ENCODE measurements at regions of chr5 and their contacts with region 1.

Region 1: GRCh38 chr5:150778517-150779396 is at the start of gene SMIM3:
- DNase-seq: peak; percentile 84
- H3K4me3 Mint-ChIP-seq: peak within 1 kb of the TSS; percentile 99
- H3K27ac Mint-ChIP-seq: peak within 1 kb of the TSS; percentile 84
- H3K4me1 Mint-ChIP-seq: peaks cover 52% of the 10 kb centered on the region
- H3K27me3 Mint-ChIP-seq: no peaks in the 10 kb centered on the region
- total RNA-seq, gene SMIM3: 22.4 to 22.8 TPM

Region 2: DNA sequence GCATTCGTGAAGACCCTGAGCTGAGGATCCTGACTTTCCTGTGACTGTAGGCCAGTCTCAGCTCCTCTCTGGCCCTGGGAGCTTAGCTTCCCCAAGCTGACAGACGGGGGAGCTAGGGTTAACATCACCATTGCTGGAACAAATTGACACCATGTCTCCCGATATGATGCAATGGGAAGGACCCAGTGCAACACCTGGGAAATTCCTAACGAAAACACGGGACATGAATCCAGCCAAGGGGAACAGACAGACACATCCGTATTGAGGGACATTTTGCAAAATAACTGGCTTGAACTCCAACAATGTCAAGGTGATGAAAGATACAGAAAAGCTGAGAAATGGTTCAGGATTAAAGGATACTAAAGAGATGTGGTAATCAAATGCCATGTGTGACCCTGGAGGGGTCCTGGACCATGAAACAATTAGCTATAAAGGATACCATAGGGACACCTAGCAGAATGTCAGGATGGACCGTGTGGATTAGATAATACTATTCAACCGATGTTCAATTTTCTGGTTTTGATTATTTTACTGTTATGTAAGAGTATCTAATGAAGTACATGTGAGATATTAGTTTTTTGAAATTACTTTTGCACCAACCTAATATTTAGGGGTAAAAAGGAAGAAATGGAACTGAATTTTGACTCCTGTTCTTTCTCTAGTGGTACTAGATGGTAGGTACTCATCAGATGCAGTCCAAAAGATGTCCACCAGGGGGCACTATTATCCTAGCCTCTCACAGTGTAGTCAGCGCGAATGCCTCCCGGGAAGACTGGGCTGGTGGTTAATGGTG is 218.2 kb before region 1 on chr5:
- CTCF ChIA-PET with region 1: interaction called, 15 read pairs
- POLR2A ChIA-PET with region 1: no interaction called
- intact Hi-C with region 1: loop called (anchors 1 kb)
- DNase-seq: peak; percentile 85
- H3K4me3 Mint-ChIP-seq: no peak overlapping the region
- H3K27ac Mint-ChIP-seq: no peak overlapping the region
- H3K4me1 Mint-ChIP-seq: no peaks in the 10 kb centered on the region
- H3K27me3 Mint-ChIP-seq: no peaks in the 10 kb centered on the region

Region 3: GRCh38 chr5:150734579-150735384 is 44.0 kb before region 1 on chr5:
- CTCF ChIA-PET with region 1: interaction called, 6 read pairs
- POLR2A ChIA-PET with region 1: interaction called, 3 read pairs
- intact Hi-C with region 1: loop called (anchors 5 kb)
- DNase-seq: peak; percentile 71
- H3K4me3 Mint-ChIP-seq: no peak overlapping the region
- H3K27ac Mint-ChIP-seq: peak overlapping the region; percentile 66
- H3K4me1 Mint-ChIP-seq: peaks cover 49% of the 10 kb centered on the region
- H3K27me3 Mint-ChIP-seq: no peaks in the 10 kb centered on the region

Region 4: GRCh38 chr5:150789943-150790611 is 11.3 kb after region 1 on chr5:
- CTCF ChIA-PET with region 1: interaction called, 32 read pairs
- POLR2A ChIA-PET with region 1: interaction called, 3 read pairs
- intact Hi-C with region 1: loop called (anchors 1 kb)
- DNase-seq: peak; percentile 88
- H3K4me3 Mint-ChIP-seq: peak overlapping the region; percentile 53
- H3K27ac Mint-ChIP-seq: peak overlapping the region; percentile 93
- H3K4me1 Mint-ChIP-seq: peaks cover 60% of the 10 kb centered on the region
- H3K27me3 Mint-ChIP-seq: no peaks in the 10 kb centered on the region

Region 5: GRCh38 chr5:151213800-151214613 is 435.2 kb after region 1 on chr5:
- CTCF ChIA-PET with region 1: no interaction called
- POLR2A ChIA-PET with region 1: no interaction called
- intact Hi-C with region 1: loop called (anchors 10 kb)
- DNase-seq: peak; percentile 94
- H3K4me3 Mint-ChIP-seq: peak overlapping the region; percentile 82
- H3K27ac Mint-ChIP-seq: peak overlapping the region; percentile 97
- H3K4me1 Mint-ChIP-seq: peaks cover 69% of the 10 kb centered on the region
- H3K27me3 Mint-ChIP-seq: no peaks in the 10 kb centered on the region